CD4-positive, alpha-beta T cell (primary cell): ENCODE measurements at regions of chr6 and their contacts with region 1.

Region 1: DNA sequence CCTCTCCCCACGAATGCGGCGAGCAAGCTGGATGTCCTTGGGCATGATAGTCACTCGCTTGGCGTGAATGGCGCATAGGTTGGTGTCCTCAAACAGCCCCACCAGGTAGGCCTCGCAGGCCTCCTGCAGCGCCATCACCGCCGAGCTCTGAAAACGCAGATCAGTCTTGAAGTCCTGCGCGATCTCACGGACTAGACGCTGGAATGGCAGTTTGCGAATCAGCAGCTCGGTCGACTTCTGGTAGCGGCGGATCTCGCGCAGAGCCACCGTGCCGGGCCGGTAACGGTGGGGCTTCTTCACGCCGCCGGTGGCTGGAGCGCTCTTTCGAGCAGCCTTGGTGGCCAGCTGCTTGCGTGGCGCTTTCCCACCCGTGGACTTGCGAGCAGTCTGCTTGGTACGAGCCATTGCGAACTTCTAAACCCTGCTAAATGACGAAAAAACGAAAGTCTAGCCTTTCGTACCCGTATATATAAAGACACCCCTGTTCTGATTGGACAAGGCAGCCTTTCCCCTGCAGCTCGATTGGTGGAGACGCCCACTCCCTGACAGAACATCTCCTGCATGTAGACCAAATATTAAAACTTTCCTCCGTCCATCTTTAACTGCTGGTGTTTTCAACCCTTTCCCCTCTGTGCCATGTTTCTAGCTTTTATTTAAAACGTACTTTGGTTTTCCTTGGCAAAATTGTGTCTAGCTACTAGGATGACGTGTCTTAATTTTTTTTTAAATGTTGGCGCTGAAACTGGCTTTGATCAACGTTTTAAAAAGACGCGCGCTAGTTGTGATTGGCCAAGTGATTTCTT is 109.8 kb downstream of the HFE start:
- DNase-seq: peak; percentile 60 to 97 (median 70)
- ATAC-seq: peak; percentile 55
- H3K4me3 ChIP-seq: peak overlapping the region; percentile 75
- H3K4me3 Mint-ChIP-seq: peak overlapping the region; percentile 94
- H3K27ac ChIP-seq: peak overlapping the region; percentile 81 to 87
- H3K27ac Mint-ChIP-seq: peak overlapping the region; percentile 97
- H3K4me1 ChIP-seq: peaks cover 26% of the 10 kb centered on the region
- H3K4me1 Mint-ChIP-seq: peaks cover 57% of the 10 kb centered on the region
- H3K27me3 ChIP-seq: no peaks in the 10 kb centered on the region
- H3K27me3 Mint-ChIP-seq: no peaks in the 10 kb centered on the region
- CTCF ChIP-seq: no peak

Region 2: GRCh38 chr6:25962149-25963127 is 234.6 kb before region 1 on chr6 and contains the start of gene TRIM38:
- CTCF ChIA-PET with region 1: no interaction called
- POLR2A ChIA-PET with region 1: no interaction called
- intact Hi-C with region 1: no loop called
- DNase-seq: peak; percentile 47 to 96 (median 69)
- ATAC-seq: peak; percentile 87
- H3K4me3 ChIP-seq: peak within 1 kb of the TSS; percentile 86
- H3K4me3 Mint-ChIP-seq: peak within 1 kb of the TSS; percentile 97
- H3K27ac ChIP-seq: peak within 1 kb of the TSS; percentile 88 to 95
- H3K27ac Mint-ChIP-seq: peak within 1 kb of the TSS; percentile 97
- H3K4me1 ChIP-seq: peaks cover 76% of the 10 kb centered on the region
- H3K4me1 Mint-ChIP-seq: peaks cover 78% of the 10 kb centered on the region
- H3K27me3 ChIP-seq: no peaks in the 10 kb centered on the region
- H3K27me3 Mint-ChIP-seq: no peaks in the 10 kb centered on the region
- CTCF ChIP-seq: no peak
- total RNA-seq, gene TRIM38: 17.0 to 17.5 TPM

Region 3: GRCh38 chr6:26020329-26021000 is 176.6 kb before region 1 on chr6:
- CTCF ChIA-PET with region 1: interaction called, 4 read pairs
- POLR2A ChIA-PET with region 1: interaction called, 92 read pairs
- intact Hi-C with region 1: loop called (anchors 5 kb)
- DNase-seq: peak; percentile 63 to 96 (median 78)
- ATAC-seq: peak; percentile 50
- H3K4me3 ChIP-seq: peak overlapping the region; percentile 73
- H3K4me3 Mint-ChIP-seq: peak overlapping the region; percentile 95
- H3K27ac ChIP-seq: peak overlapping the region; percentile 95 to 96
- H3K27ac Mint-ChIP-seq: peak overlapping the region; percentile 97
- H3K4me1 ChIP-seq: peaks cover 38% of the 10 kb centered on the region
- H3K4me1 Mint-ChIP-seq: peaks cover 41% of the 10 kb centered on the region
- H3K27me3 ChIP-seq: no peaks in the 10 kb centered on the region
- H3K27me3 Mint-ChIP-seq: no peaks in the 10 kb centered on the region
- CTCF ChIP-seq: no peak

Region 4: GRCh38 chr6:26087284-26088115 is 109.5 kb before region 1 on chr6 and contains the start of gene HFE:
- CTCF ChIA-PET with region 1: interaction called, 3 read pairs
- POLR2A ChIA-PET with region 1: interaction called, 11 read pairs
- intact Hi-C with region 1: no loop called
- DNase-seq: peak in 11 of 14 experiments; percentile 3 to 57 (median 21)
- ATAC-seq: peak; percentile 25
- H3K4me3 ChIP-seq: peak within 1 kb of the TSS; percentile 86
- H3K4me3 Mint-ChIP-seq: peak within 1 kb of the TSS; percentile 87
- H3K27ac ChIP-seq: peak within 1 kb of the TSS; percentile 23 to 61
- H3K27ac Mint-ChIP-seq: peak within 1 kb of the TSS; percentile 71
- H3K4me1 ChIP-seq: peaks cover 33% of the 10 kb centered on the region
- H3K4me1 Mint-ChIP-seq: peaks cover 34% of the 10 kb centered on the region
- H3K27me3 ChIP-seq: no peaks in the 10 kb centered on the region
- H3K27me3 Mint-ChIP-seq: no peaks in the 10 kb centered on the region
- CTCF ChIP-seq: no peak
- total RNA-seq, gene HFE: 0.08 to 0.28 TPM

Region 5: GRCh38 chr6:26183581-26184366 is 13.3 kb before region 1 on chr6:
- CTCF ChIA-PET with region 1: interaction called, 56 read pairs
- POLR2A ChIA-PET with region 1: interaction called, 866 read pairs
- intact Hi-C with region 1: no loop called
- DNase-seq: peak in 13 of 14 experiments; percentile 20 to 94 (median 48)
- ATAC-seq: peak; percentile 89
- H3K4me3 ChIP-seq: peak overlapping the region; percentile 62
- H3K4me3 Mint-ChIP-seq: peak overlapping the region; percentile 99
- H3K27ac ChIP-seq: peak overlapping the region; percentile 43 to 72
- H3K27ac Mint-ChIP-seq: peak overlapping the region; percentile 86
- H3K4me1 ChIP-seq: peaks cover 34% of the 10 kb centered on the region
- H3K4me1 Mint-ChIP-seq: peaks cover 42% of the 10 kb centered on the region
- H3K27me3 ChIP-seq: no peaks in the 10 kb centered on the region
- H3K27me3 Mint-ChIP-seq: no peaks in the 10 kb centered on the region
- CTCF ChIP-seq: no peak

Region 6: DNA sequence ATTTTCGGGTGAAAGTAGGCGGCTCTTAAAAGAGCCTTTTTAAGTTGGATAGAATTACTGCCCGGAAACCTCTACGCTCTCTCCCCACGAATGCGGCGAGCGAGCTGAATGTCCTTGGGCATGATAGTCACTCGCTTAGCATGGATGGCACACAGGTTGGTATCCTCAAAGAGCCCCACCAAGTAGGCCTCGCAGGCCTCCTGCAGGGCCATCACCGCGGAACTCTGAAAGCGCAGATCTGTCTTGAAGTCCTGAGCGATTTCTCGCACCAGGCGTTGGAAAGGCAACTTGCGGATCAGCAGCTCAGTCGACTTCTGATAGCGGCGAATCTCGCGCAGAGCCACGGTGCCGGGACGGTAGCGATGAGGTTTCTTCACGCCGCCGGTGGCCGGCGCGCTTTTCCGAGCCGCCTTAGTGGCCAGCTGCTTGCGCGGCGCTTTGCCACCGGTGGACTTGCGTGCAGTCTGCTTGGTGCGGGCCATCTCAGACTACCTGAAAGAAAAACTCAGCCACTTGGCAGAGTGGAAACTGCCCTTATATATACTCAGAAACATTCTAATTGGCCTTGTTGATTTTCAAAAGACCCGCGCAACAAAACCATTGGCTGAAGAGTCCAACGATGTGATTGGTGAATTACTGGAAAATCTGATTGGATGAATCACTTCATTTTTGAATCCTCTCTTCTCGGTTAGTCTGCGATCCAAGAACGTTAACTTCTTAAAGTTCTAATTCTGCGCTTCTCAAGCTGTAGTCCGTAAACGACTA is 74.0 kb after region 1 on chr6:
- CTCF ChIA-PET with region 1: interaction called, 7 read pairs
- POLR2A ChIA-PET with region 1: interaction called, 463 read pairs
- intact Hi-C with region 1: loop called in 1 of 2 experiments (anchors 1 kb)
- DNase-seq: peak; percentile 60 to 92 (median 75)
- ATAC-seq: peak; percentile 25
- H3K4me3 ChIP-seq: peak overlapping the region; percentile 59
- H3K4me3 Mint-ChIP-seq: no peak overlapping the region
- H3K27ac ChIP-seq: peak overlapping the region; percentile 82 to 84
- H3K27ac Mint-ChIP-seq: no peak overlapping the region
- H3K4me1 ChIP-seq: peaks cover 28% of the 10 kb centered on the region
- H3K4me1 Mint-ChIP-seq: peaks cover 7% of the 10 kb centered on the region
- H3K27me3 ChIP-seq: no peaks in the 10 kb centered on the region
- H3K27me3 Mint-ChIP-seq: no peaks in the 10 kb centered on the region
- CTCF ChIP-seq: no peak

Region 7: GRCh38 chr6:26295691-26296555 is 98.9 kb after region 1 on chr6:
- CTCF ChIA-PET with region 1: no interaction called
- POLR2A ChIA-PET with region 1: no interaction called
- intact Hi-C with region 1: no loop called
- DNase-seq: peak in 1 of 14 experiments; percentile 20
- ATAC-seq: no peak
- H3K4me3 ChIP-seq: no peak overlapping the region
- H3K4me3 Mint-ChIP-seq: peak overlapping the region; percentile 42
- H3K27ac ChIP-seq: no peak overlapping the region
- H3K27ac Mint-ChIP-seq: no peak overlapping the region
- H3K4me1 ChIP-seq: peaks cover 4% of the 10 kb centered on the region
- H3K4me1 Mint-ChIP-seq: peaks cover 4% of the 10 kb centered on the region
- H3K27me3 ChIP-seq: no peaks in the 10 kb centered on the region
- H3K27me3 Mint-ChIP-seq: no peaks in the 10 kb centered on the region
- CTCF ChIP-seq: no peak

Region 8: GRCh38 chr6:26537846-26538571 is 341.0 kb after region 1 on chr6 and contains the start of gene HMGN4:
- CTCF ChIA-PET with region 1: no interaction called
- POLR2A ChIA-PET with region 1: interaction called, 33 read pairs
- intact Hi-C with region 1: no loop called
- DNase-seq: peak; percentile 66 to 97 (median 76)
- ATAC-seq: peak; percentile 70
- H3K4me3 ChIP-seq: peak within 1 kb of the TSS; percentile 93
- H3K4me3 Mint-ChIP-seq: peak within 1 kb of the TSS; percentile 94
- H3K27ac ChIP-seq: peak within 1 kb of the TSS; percentile 84 to 91
- H3K27ac Mint-ChIP-seq: peak within 1 kb of the TSS; percentile 98
- H3K4me1 ChIP-seq: peaks cover 51% of the 10 kb centered on the region
- H3K4me1 Mint-ChIP-seq: peaks cover 57% of the 10 kb centered on the region
- H3K27me3 ChIP-seq: no peaks in the 10 kb centered on the region
- H3K27me3 Mint-ChIP-seq: peaks cover 13% of the 10 kb centered on the region
- CTCF ChIP-seq: no peak
- total RNA-seq, gene HMGN4: 22.7 to 24.8 TPM

Region 9: GRCh38 chr6:27809939-27810767 is 1613.1 kb after region 1 on chr6:
- CTCF ChIA-PET with region 1: interaction called, 4 read pairs
- POLR2A ChIA-PET with region 1: interaction called, 77 read pairs
- intact Hi-C with region 1: no loop called
- DNase-seq: peak; percentile 63 to 98 (median 75)
- ATAC-seq: peak; percentile 61
- H3K4me3 ChIP-seq: peak overlapping the region; percentile 64
- H3K4me3 Mint-ChIP-seq: peak overlapping the region; percentile 95
- H3K27ac ChIP-seq: peak overlapping the region; percentile 69 to 81
- H3K27ac Mint-ChIP-seq: peak overlapping the region; percentile 96
- H3K4me1 ChIP-seq: peaks cover 39% of the 10 kb centered on the region
- H3K4me1 Mint-ChIP-seq: peaks cover 68% of the 10 kb centered on the region
- H3K27me3 ChIP-seq: no peaks in the 10 kb centered on the region
- H3K27me3 Mint-ChIP-seq: no peaks in the 10 kb centered on the region
- CTCF ChIP-seq: no peak